ENCODE measurements at regions of chr1 and their contacts with region 1.

Region 1: DNA sequence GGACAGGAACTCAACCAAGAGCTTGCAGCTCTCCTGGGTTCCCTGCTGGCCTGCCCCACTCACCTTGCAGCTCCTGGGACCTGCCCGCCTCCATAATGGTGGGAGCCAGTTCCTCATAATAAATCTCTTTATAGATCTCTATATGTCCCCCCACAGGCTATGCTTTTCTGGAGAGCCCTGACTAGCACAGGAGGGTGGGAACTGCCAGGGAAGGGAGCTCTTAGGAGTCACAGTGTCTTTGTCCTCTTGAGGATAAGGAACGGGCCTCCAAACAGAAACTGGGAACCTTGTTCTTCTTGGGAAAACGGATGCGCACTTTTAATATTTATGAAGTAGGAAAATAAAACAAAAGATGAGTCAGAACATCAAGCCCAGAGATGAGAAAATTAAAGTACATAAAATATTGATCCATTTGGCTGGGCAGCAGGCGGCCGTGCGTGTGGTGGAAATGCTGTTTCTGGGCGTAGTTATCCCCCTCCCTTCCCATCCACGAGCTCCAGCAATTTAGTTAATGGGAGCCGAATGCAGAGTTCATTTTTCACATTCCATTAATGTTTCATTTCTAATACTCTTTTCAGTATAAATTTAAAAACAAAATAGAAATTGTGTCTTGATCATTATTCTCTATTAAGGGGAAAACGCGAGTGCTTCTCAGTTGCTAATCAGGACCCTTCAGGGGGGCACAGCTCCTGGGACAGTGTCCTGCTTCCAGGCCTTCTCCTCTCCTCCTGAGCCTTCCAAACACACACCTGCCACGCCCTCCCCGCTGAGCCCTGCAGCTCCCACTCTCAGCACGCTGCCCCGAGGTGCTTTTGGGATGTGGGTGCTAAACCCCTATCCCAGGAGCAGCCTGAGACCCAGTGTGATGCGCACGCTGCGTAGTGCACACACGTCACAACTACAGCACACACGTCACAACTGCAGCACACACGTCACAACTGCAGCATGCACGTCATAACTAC is 323.3 kb upstream of the AJAP1 start:
- DNase-seq: no peak
- ATAC-seq: no peak
- H3K4me3 ChIP-seq: no peak overlapping the region
- H3K4me3 Mint-ChIP-seq: no peak overlapping the region
- H3K27ac ChIP-seq: no peak overlapping the region
- H3K27ac Mint-ChIP-seq: no peak overlapping the region
- H3K4me1 ChIP-seq: no peaks in the 10 kb centered on the region
- H3K4me1 Mint-ChIP-seq: peaks cover 0 to 3% (median 0%) of the 10 kb centered on the region in 7 donors
- H3K27me3 ChIP-seq: no peaks in the 10 kb centered on the region
- H3K27me3 Mint-ChIP-seq: peaks cover 0 to 42% (median 19%) of the 10 kb centered on the region in 5 donors

Region 2: DNA sequence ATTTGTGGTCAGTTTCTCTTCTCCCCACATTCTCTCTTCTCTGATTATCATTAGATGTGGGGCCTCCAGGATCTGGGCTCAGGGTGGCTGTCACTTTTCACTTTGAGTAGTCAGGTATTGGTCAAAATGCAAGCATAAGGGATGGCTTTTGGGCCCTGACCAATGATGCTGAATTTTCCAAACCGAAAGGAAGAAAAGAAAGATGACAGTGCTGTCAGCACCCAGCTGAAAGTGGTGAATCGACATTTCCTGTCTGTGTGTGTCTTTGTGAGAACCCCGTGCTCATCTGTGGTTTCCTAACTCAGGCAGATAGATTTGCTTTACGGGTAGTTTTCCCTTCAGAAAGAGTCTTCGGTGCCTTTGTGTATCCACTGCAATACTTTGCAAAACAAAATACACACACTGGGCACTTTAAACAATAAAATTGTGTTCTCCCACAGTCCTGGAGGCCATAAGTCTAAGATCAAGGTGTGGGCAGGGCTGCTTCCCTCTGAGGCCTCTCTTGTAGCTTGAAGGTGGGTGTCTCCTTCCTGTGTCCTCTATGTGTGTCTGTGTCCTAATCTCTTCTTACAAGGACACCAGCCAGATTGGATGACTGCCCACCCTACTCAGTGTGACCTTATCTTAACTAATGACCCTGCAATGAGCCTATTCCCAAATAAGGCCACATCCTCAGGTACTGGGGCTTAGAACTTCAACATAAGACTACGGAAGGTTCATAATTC is 48.5 kb after region 1 on chr1:
- CTCF ChIA-PET with region 1: no interaction called
- POLR2A ChIA-PET with region 1: no interaction called
- intact Hi-C with region 1: loop called in 1 of 2 experiments (anchors 2 kb)
- DNase-seq: peak in 1 of 9 donors; percentile 22
- ATAC-seq: no peak
- H3K4me3 ChIP-seq: no peak overlapping the region
- H3K4me3 Mint-ChIP-seq: peak overlapping the region in 2 of 10 donors; percentile 6 to 57
- H3K27ac ChIP-seq: no peak overlapping the region
- H3K27ac Mint-ChIP-seq: peak overlapping the region in 1 of 9 donors; percentile 65
- H3K4me1 ChIP-seq: no peaks in the 10 kb centered on the region
- H3K4me1 Mint-ChIP-seq: peaks cover 0 to 18% (median 0%) of the 10 kb centered on the region in 7 donors
- H3K27me3 ChIP-seq: no peaks in the 10 kb centered on the region
- H3K27me3 Mint-ChIP-seq: peaks cover 0 to 17% (median 5%) of the 10 kb centered on the region in 5 donors